ENCODE measurements at regions of chr5 and their contacts with region 1.

Region 1: DNA sequence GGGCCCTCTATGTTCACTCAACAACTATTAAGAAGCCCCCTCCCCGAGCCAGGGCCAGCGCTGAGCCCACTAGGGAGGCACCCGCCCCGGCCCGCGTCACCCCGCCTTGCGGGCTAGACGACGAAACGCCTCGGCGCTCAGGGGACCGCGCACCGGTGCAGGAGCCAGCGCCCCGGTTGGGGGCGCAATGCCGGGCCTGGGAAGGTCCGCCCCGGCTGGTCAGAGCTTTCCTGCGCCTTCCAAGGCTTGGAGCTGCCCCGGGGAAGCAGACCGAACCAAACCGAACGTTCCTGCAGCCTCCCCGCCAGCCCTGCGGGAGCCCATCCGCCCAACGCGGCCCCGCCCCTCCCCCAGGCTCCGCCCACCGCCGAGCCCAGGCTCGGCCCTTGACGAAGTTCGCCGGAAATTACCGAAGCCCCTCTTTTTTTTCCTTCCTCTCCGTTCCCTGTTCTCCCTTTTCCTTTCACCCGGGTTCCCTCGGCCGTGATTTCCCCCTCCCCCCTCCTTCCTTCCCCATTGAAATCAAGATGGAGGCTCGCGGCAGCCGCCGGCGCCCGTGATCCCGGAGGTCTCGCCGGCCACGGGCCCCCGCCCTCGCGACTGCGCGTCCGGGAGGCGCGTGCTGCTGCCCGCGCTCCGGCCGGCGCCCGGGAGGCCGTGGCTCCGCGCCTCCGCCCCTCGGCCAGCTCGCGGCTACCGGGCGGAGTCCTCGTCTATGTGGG is at the start of gene TRIO:
- DNase-seq: peak; percentile 91
- ATAC-seq: peak; percentile 77
- H3K4me3 ChIP-seq: peak within 1 kb of the TSS; percentile 94
- H3K27ac ChIP-seq: peak within 1 kb of the TSS; percentile 100
- H3K4me1 ChIP-seq: peaks cover 10% of the 10 kb centered on the region
- H3K27me3 ChIP-seq: no peaks in the 10 kb centered on the region
- CTCF ChIP-seq: peak; percentile 45
- POLR2A ChIP-seq: peak; percentile 73
- RAD21 ChIP-seq: peak; percentile 32
- total RNA-seq, gene TRIO: 487 and 522 TPM in 2 replicates

Region 2: GRCh38 chr5:13133951-13134350 is 1009.0 kb before region 1 on chr5:
- CTCF ChIA-PET with region 1: no interaction called
- POLR2A ChIA-PET with region 1: no interaction called
- dilution Hi-C with region 1: no loop called
- in situ Hi-C with region 1: no loop called
- intact Hi-C with region 1: no loop called
- DNase-seq: no peak
- ATAC-seq: no peak
- H3K4me3 ChIP-seq: no peak overlapping the region
- H3K27ac ChIP-seq: no peak overlapping the region
- H3K4me1 ChIP-seq: no peaks in the 10 kb centered on the region
- H3K27me3 ChIP-seq: no peaks in the 10 kb centered on the region
- CTCF ChIP-seq: no peak
- POLR2A ChIP-seq: no peak
- RAD21 ChIP-seq: no peak

Region 3: GRCh38 chr5:13994621-13995253 is 148.3 kb before region 1 on chr5:
- CTCF ChIA-PET with region 1: no interaction called
- POLR2A ChIA-PET with region 1: interaction called, 4 read pairs
- dilution Hi-C with region 1: no loop called
- in situ Hi-C with region 1: loop called (anchors 5 kb)
- intact Hi-C with region 1: loop called (anchors 2 kb)
- DNase-seq: peak; percentile 94
- ATAC-seq: peak; percentile 82
- H3K4me3 ChIP-seq: no peak overlapping the region
- H3K27ac ChIP-seq: peak overlapping the region; percentile 91
- H3K4me1 ChIP-seq: peaks cover 25% of the 10 kb centered on the region
- H3K27me3 ChIP-seq: no peaks in the 10 kb centered on the region
- CTCF ChIP-seq: no peak
- POLR2A ChIP-seq: no peak
- RAD21 ChIP-seq: 0 out of 2 replicates have a peak, but pooled peaks have one; percentile 1

Region 4: GRCh38 chr5:14035859-14036440 is 107.0 kb before region 1 on chr5:
- CTCF ChIA-PET with region 1: interaction called, 5 read pairs
- POLR2A ChIA-PET with region 1: interaction called, 6 read pairs
- dilution Hi-C with region 1: no loop called
- in situ Hi-C with region 1: no loop called
- intact Hi-C with region 1: loop called (anchors 1 kb)
- DNase-seq: peak; percentile 100
- ATAC-seq: peak; percentile 68
- H3K4me3 ChIP-seq: no peak overlapping the region
- H3K27ac ChIP-seq: peak overlapping the region; percentile 99
- H3K4me1 ChIP-seq: peaks cover 47% of the 10 kb centered on the region
- H3K27me3 ChIP-seq: no peaks in the 10 kb centered on the region
- CTCF ChIP-seq: no peak
- POLR2A ChIP-seq: no peak
- RAD21 ChIP-seq: peak; percentile 32

Region 5: DNA sequence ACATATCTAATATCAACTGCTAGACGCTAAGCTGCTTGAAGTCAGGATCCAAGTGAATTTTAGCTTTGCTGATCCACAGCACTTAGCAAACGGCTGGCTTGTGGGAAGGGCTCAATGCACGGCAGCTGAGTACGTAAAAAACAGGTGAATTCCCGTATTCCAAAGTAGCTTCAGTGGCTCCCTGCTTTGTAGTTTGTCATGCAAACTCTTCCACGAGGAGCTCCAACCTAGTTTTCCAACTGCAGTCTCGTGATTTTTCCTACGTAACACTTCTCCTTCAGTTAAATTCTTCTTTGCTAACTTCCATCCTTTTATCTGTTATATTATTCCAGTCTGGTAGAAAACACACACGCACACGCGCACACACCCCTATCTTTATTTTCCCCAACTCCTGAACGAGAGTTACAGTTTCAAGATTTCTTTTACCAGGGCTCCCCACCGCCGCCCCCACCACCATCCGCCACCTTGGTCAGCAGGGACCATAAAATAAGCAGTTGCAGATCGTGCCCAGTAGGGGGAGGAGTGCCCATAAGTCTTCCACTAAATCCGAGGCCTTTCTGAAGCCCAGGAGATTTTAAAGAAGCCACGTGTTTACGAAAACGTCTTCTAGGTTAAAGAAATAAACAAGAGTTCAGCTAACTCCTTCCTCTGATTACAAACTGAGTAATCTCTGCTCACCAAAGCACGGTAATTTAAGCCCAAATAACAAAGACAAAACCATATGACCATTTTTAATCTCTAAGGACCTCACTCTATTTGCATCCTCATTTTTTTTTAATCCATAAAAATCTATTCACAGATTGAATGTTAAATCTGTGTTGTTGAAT is 34.6 kb before region 1 on chr5:
- CTCF ChIA-PET with region 1: interaction called, 4 read pairs
- POLR2A ChIA-PET with region 1: interaction called, 7 read pairs
- dilution Hi-C with region 1: no loop called
- in situ Hi-C with region 1: no loop called
- intact Hi-C with region 1: loop called (anchors 1 kb)
- DNase-seq: peak; percentile 91
- ATAC-seq: peak; percentile 83
- H3K4me3 ChIP-seq: no peak overlapping the region
- H3K27ac ChIP-seq: peak overlapping the region; percentile 54
- H3K4me1 ChIP-seq: peaks cover 9% of the 10 kb centered on the region
- H3K27me3 ChIP-seq: no peaks in the 10 kb centered on the region
- CTCF ChIP-seq: peak; percentile 72
- POLR2A ChIP-seq: no peak
- RAD21 ChIP-seq: peak; percentile 72

Region 6: GRCh38 chr5:14131855-14132503 is 11.0 kb before region 1 on chr5:
- CTCF ChIA-PET with region 1: no interaction called
- POLR2A ChIA-PET with region 1: no interaction called
- dilution Hi-C with region 1: no loop called
- in situ Hi-C with region 1: no loop called
- intact Hi-C with region 1: no loop called
- DNase-seq: no peak
- ATAC-seq: peak; percentile 16; the same call in 1 of the 2 replicates
- H3K4me3 ChIP-seq: no peak overlapping the region
- H3K27ac ChIP-seq: no peak overlapping the region
- H3K4me1 ChIP-seq: peaks cover 9% of the 10 kb centered on the region
- H3K27me3 ChIP-seq: peaks cover 9% of the 10 kb centered on the region; the same call in 1 of the 2 replicates
- CTCF ChIP-seq: no peak
- POLR2A ChIP-seq: no peak
- RAD21 ChIP-seq: no peak

Region 7: DNA sequence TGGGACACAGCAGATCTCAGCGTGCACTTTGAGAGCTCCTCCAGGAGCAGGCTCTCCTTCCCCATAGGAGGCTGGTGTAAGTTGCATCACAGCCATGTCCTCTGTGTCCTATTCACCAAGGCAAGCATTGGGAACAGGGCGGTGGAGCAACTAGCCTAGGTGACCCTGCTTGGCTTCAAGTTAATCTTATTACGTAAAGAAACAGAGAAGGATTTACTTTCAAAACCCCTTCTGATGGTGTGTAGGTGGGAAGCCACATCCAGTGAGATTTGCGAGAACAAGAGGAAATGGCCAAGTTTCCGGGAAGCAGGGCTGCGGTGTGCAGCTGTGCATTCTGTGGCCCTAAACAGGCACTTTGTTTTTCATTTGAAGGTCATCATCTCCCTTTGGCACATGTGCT is 80.4 kb after region 1 on chr5:
- CTCF ChIA-PET with region 1: no interaction called
- POLR2A ChIA-PET with region 1: no interaction called
- dilution Hi-C with region 1: no loop called
- in situ Hi-C with region 1: no loop called
- intact Hi-C with region 1: no loop called
- DNase-seq: no peak
- ATAC-seq: no peak
- H3K4me3 ChIP-seq: no peak overlapping the region
- H3K27ac ChIP-seq: 0 out of 2 replicates have a peak overlapping the region, but pooled peaks have one; percentile 7
- H3K4me1 ChIP-seq: peaks cover 43% of the 10 kb centered on the region
- H3K27me3 ChIP-seq: no peaks in the 10 kb centered on the region
- CTCF ChIP-seq: no peak
- POLR2A ChIP-seq: no peak
- RAD21 ChIP-seq: no peak

Region 8: DNA sequence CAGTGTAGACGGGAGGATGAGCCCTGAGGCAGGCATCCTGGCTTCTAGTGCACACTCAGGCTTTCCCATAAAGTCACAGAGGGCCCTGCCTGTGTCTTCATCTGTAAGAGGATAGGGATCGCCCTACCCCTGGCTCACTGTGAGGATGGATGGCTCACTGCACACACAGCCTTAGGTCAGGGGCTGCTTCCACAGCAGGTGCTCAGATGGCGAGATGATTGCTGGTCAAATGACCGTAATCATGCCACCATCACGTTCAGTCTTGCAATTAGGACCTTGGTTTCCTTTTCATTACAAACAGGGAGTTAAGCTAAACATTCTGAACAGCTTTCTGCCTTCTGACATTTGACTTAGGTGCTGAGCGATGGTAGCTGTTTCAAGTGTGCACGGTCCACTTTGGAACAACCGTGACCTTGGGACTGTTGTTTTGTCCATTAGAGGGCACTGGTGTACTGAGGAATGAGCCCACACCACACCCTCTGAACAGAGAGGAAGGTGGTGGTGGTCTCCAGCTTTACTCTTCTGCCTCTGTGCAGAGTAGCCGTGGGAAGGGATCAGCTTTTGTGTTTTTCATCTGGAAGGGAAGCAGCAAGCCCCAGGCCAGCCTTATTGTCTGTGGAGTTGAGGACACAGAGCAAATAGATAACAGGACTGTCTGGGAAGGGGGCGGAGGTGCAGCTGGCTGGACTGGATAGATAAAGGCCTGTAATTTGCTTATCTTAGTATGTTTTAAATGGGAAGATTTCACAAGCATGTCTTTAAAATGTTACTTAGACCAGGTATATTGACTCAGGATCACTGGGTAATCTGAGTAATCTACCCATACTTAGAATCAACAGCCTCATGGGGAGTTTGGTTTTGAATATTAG is 183.3 kb after region 1 on chr5:
- CTCF ChIA-PET with region 1: no interaction called
- POLR2A ChIA-PET with region 1: interaction called, 12 read pairs
- dilution Hi-C with region 1: no loop called
- in situ Hi-C with region 1: no loop called
- intact Hi-C with region 1: no loop called
- DNase-seq: no peak
- ATAC-seq: peak; percentile 16; the same call in 1 of the 2 replicates
- H3K4me3 ChIP-seq: no peak overlapping the region
- H3K27ac ChIP-seq: peak overlapping the region; percentile 45; the same call in 1 of the 2 replicates
- H3K4me1 ChIP-seq: peaks cover 34% of the 10 kb centered on the region
- H3K27me3 ChIP-seq: no peaks in the 10 kb centered on the region
- CTCF ChIP-seq: peak; percentile 18; the same call in 1 of the 2 replicates
- POLR2A ChIP-seq: no peak
- RAD21 ChIP-seq: no peak

Region 9: DNA sequence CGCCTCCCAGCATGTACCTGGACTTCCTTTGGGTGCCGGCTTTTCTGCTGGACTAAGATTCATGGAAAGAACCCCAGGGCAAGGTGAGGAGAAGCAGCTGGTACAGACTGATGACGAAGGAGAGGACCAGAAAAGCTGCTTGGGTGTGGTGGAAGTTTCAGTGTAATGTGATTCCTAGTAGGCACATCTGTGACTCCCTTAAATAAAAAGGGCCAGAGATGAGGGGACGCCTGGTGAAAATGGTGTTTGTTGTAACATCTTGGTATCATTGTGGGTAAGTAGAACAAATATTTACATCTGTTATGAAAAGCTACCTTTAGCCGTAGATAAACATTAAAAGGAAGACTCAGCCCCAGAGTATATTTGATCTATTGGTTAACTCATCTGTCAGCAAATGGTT is 472.4 kb after region 1 on chr5:
- CTCF ChIA-PET with region 1: no interaction called
- POLR2A ChIA-PET with region 1: no interaction called
- dilution Hi-C with region 1: no loop called
- in situ Hi-C with region 1: no loop called
- intact Hi-C with region 1: no loop called
- DNase-seq: no peak
- ATAC-seq: no peak
- H3K4me3 ChIP-seq: no peak overlapping the region
- H3K27ac ChIP-seq: no peak overlapping the region
- H3K4me1 ChIP-seq: no peaks in the 10 kb centered on the region
- H3K27me3 ChIP-seq: peaks cover 30% of the 10 kb centered on the region
- CTCF ChIP-seq: no peak
- POLR2A ChIP-seq: no peak
- RAD21 ChIP-seq: no peak